ENCODE measurements at regions of chr10 and their contacts with region 1.

Region 1: GRCh38 chr10:72364239-72364777 is 9.6 kb upstream of the DNAJB12 start:
- DNase-seq: peak; percentile 91
- ATAC-seq: peak; percentile 95

Region 2: GRCh38 chr10:72834183-72834825 is 470.0 kb after region 1 on chr10:
- intact Hi-C with region 1: loop called (anchors 5 kb)
- DNase-seq: no peak
- ATAC-seq: peak; percentile 80

Measured in Right ventricle myocardium superior (tissue), 1 donor.